Activated CD8-positive, alpha-beta T cell treated with anti-CD3 and anti-CD28 coated beads for 36 hours (primary cell): ENCODE measurements at regions of chr1 and their contacts with region 1.

Region 1: DNA sequence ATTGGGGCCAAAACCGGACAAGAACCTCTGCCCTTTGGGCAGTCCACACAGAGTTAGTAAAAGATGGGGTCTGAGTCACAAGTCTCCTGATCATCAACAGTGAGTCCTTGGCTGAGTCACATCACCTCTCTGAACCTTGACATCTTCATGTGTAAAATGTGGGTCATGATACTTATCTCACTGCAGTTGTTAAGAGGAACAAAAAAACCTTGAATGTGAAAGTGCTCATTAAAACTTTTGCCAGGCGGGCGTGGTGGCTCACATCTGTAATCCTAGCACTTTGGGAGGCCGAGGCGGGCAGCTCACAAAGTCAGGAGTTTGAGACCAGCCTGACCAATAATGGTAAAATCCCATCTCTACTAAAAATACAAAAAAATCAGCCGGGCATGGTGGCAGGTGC is 15.7 kb downstream of the S100A16 start:
- DNase-seq: peak; percentile 45
- ATAC-seq: peak; percentile 85
- H3K4me3 Mint-ChIP-seq: no peak overlapping the region
- H3K27ac Mint-ChIP-seq: no peak overlapping the region
- H3K4me1 Mint-ChIP-seq: peaks cover 16% of the 10 kb centered on the region
- H3K27me3 Mint-ChIP-seq: no peaks in the 10 kb centered on the region
- CTCF ChIP-seq: no peak

Region 2: GRCh38 chr1:153525088-153525728 is 72.0 kb before region 1 on chr1:
- CTCF ChIA-PET with region 1: no interaction called
- POLR2A ChIA-PET with region 1: no interaction called
- intact Hi-C with region 1: no loop called
- DNase-seq: no peak
- ATAC-seq: no peak
- H3K4me3 Mint-ChIP-seq: no peak overlapping the region
- H3K27ac Mint-ChIP-seq: no peak overlapping the region
- H3K4me1 Mint-ChIP-seq: peaks cover 5% of the 10 kb centered on the region
- H3K27me3 Mint-ChIP-seq: no peaks in the 10 kb centered on the region
- CTCF ChIP-seq: no peak

Region 3: DNA sequence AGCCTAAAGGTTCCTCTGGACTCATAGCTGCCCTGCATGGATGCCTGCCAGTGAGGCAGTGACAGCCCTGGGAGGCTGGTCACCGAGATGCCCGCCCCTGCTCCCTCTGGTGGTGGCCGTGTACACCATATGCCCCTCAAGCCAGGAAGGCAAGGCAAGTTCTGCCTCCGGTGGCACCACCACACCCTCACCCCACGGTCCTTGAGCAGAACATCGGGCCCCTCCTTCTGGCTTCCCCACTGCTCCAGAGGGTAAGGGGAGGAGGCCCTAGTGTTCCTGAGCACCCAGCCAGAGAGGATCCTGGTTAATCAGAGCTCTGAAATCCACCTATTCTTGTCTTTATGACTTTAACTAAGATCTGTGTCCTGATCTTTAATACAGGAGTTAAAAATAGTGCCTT is 20.5 kb after region 1 on chr1:
- CTCF ChIA-PET with region 1: interaction called, 11 read pairs
- POLR2A ChIA-PET with region 1: interaction called, 3 read pairs
- intact Hi-C with region 1: no loop called
- DNase-seq: peak; percentile 87
- ATAC-seq: peak; percentile 96
- H3K4me3 Mint-ChIP-seq: no peak overlapping the region
- H3K27ac Mint-ChIP-seq: no peak overlapping the region
- H3K4me1 Mint-ChIP-seq: peaks cover 5% of the 10 kb centered on the region
- H3K27me3 Mint-ChIP-seq: no peaks in the 10 kb centered on the region
- CTCF ChIP-seq: peak; percentile 73

Region 4: DNA sequence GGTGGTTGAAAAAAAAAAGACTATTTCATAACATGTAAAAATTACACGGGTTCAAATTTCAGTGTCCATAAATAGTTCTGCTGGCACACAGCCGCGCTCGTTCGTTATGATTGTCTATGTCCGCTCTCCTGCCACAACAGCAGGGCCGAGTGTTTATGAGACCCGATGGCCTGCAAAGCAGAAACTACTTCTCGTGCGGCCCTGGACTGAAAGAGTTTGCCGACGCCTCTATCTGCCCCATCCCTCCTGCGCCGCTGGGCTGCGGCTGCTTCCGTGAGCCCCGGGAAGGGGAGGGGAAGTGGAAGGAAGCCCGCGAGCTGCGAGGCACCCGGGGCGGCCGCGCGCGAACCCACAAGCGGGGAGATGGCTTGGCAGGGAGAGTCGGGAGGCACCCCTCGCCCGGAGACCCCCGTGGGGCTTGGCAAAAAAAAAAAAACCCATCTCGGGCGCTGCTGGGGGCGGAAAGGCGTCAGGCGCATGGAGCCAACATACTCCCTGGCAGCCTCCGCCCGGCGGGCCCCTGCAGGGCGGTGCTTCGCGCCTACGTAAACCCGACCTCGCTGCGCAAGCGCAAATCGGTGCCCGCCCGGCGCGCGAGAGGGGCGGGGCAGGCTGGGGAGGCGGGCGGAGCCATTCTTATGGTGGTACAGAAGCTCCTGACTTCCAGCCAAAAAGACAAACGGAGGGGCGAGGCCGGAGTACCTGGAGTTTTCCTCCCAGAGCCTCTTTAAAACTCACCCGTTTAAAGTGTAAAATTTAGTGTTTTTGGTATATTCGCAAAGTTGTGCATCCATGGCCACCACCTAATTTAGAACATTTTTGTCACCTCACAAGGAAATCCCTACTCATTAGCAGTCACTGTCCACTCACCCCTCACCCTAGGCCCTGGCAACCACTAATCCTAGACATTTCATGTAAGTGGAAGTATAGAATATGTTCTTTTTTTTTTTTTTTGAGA is 186.3 kb after region 1 on chr1:
- CTCF ChIA-PET with region 1: no interaction called
- POLR2A ChIA-PET with region 1: no interaction called
- intact Hi-C with region 1: no loop called
- DNase-seq: peak; percentile 93
- ATAC-seq: peak; percentile 98
- H3K4me3 Mint-ChIP-seq: peak overlapping the region; percentile 76
- H3K27ac Mint-ChIP-seq: peak overlapping the region; percentile 93
- H3K4me1 Mint-ChIP-seq: peaks cover 8% of the 10 kb centered on the region
- H3K27me3 Mint-ChIP-seq: no peaks in the 10 kb centered on the region
- CTCF ChIP-seq: no peak